HEK293 (cell line): ENCODE measurements at regions of chr22 and their contacts with region 1.

Region 1: DNA sequence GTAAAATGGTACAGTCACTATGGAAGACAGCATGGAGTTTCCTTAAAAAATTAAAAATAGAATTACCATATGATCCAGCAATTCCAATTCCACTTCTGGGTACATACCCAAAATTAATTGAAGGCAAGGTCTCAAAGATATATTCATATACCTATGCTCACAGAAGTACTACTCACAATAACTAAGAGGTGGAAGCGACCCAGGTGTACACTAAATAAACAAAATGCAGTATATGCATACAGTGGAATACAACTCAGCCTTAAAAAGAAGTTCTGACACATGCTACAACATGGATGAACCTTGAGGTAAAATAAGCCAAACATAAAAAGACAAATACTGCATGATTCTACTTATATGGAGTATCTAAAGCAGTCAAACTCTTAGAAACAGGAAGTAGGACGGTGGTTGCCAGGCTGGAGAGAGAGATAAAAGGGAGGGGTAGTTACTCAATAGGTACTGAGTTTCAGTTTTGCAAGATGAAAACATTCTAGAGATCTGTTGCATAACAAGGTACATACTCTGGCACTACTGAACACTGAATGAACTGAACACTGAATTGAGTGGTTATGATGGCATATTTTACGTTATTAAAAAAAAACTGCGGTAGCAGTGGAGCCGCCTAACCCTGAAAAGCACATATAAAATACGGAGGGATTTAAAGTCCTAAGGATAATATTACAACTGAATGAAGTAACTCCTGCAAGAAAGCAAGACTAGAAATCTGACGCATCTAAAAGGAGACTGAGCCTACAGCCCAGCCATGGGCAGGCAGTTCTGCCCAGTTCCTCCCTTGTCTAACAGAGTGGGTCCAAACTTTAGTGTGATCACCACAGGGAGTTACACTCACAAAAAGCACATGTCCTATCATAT is 12.8 kb downstream of the DGCR2 start:
- H3K4me3 ChIP-seq: no peak overlapping the region
- H3K27ac ChIP-seq: no peak overlapping the region
- H3K4me1 ChIP-seq: peaks cover 3% of the 10 kb centered on the region
- CTCF ChIP-seq: no peak

Region 2: DNA sequence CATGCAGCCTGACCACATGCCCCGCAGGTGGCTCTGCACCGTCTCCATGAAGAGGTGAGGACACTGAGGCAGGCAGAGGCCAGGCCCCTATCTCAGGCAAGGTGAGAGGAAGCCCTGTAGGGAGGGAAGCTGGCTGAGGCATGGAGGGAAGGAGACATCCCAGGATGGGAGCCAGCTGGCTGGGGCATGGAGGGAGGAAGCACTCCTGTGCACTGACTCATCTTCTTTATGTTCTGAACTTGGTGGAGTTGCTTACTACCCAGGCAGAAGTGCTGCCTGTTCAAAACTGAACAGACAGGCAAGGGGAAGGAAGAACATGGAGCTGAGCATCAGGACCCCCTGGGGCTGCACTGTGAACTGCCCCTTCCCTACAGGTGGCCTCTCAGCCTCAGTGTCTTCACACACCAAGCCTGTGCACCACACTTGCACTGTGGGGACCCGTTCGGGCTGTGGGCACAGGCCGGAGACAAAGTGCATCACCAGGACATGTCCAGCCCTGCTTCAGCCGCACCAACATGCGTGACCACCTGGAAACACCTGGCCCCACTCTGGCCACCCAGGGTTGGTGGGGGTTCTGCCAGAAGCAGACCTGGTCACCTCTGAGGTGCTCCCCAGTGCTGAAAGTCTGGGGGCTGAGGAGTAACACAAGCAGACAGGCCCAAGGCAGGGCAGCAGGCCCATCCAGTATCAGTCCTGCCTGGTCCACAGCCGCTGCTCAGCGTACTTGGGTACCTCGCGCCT is 42.7 kb before region 1 on chr22:
- CTCF ChIA-PET with region 1: no interaction called
- POLR2A ChIA-PET with region 1: no interaction called
- H3K4me3 ChIP-seq: no peak overlapping the region
- H3K27ac ChIP-seq: no peak overlapping the region
- H3K4me1 ChIP-seq: no peaks in the 10 kb centered on the region
- CTCF ChIP-seq: no peak

Region 3: GRCh38 chr22:19085233-19085718 is 24.2 kb before region 1 on chr22:
- CTCF ChIA-PET with region 1: no interaction called
- POLR2A ChIA-PET with region 1: no interaction called
- H3K4me3 ChIP-seq: no peak overlapping the region
- H3K27ac ChIP-seq: no peak overlapping the region
- H3K4me1 ChIP-seq: peaks cover 5% of the 10 kb centered on the region
- CTCF ChIP-seq: peak; percentile 49; the same call in 1 of the 2 replicates

Region 4: GRCh38 chr22:19122143-19122751 is 12.8 kb after region 1 on chr22 and contains the start of gene DGCR2:
- CTCF ChIA-PET with region 1: interaction called, 4 read pairs
- POLR2A ChIA-PET with region 1: interaction called, 17 read pairs
- H3K4me3 ChIP-seq: peak within 1 kb of the TSS; percentile 94
- H3K27ac ChIP-seq: peak within 1 kb of the TSS; percentile 75
- H3K4me1 ChIP-seq: no peaks in the 10 kb centered on the region
- CTCF ChIP-seq: no peak

Region 5: DNA sequence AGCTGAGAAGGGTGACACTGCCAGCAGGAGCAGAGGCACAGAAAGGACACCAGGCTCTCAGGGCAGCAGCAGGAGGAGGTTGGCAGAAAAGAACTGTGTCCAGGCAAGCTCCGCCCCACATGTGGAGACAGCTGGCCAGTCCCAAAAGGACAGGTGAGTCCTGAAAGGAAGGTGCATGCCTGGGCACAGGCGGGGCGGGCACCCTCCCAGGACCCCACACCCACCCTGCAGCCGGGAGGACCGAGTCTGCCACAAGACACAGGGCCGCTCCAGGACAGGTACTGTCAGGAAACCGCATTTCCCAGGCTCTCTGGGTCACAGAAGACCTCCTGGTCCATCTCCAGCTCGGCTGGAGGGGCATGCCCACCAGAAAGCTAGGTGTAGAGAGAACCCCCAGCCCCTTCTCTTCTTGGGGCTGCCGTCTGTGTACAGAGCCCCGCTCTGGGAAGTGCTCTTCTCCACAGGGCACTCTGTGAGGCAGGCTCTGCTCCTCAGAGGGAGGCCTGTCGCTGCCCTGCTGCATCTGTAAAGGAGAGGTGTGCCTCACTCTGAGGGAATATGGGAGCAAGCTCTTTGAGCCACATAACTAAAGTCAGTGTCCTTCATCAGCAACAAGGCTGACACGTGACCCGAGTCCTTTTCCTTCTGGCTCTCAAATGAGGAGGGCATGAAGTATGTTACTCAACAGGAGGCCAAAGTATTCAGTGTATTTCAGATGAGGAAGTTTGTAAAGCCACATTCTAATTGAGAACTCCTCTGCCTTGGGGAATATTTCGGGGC is 131.6 kb after region 1 on chr22:
- CTCF ChIA-PET with region 1: no interaction called
- POLR2A ChIA-PET with region 1: no interaction called
- H3K4me3 ChIP-seq: no peak overlapping the region
- H3K27ac ChIP-seq: no peak overlapping the region
- H3K4me1 ChIP-seq: no peaks in the 10 kb centered on the region
- CTCF ChIP-seq: no peak

Region 6: GRCh38 chr22:19357270-19358105 is 248.1 kb after region 1 on chr22:
- CTCF ChIA-PET with region 1: no interaction called
- POLR2A ChIA-PET with region 1: no interaction called
- H3K4me3 ChIP-seq: no peak overlapping the region
- H3K27ac ChIP-seq: no peak overlapping the region
- H3K4me1 ChIP-seq: no peaks in the 10 kb centered on the region
- CTCF ChIP-seq: no peak